AG04449 (cell line): ENCODE measurements at regions of chr2 and their contacts with region 1.

Region 1: DNA sequence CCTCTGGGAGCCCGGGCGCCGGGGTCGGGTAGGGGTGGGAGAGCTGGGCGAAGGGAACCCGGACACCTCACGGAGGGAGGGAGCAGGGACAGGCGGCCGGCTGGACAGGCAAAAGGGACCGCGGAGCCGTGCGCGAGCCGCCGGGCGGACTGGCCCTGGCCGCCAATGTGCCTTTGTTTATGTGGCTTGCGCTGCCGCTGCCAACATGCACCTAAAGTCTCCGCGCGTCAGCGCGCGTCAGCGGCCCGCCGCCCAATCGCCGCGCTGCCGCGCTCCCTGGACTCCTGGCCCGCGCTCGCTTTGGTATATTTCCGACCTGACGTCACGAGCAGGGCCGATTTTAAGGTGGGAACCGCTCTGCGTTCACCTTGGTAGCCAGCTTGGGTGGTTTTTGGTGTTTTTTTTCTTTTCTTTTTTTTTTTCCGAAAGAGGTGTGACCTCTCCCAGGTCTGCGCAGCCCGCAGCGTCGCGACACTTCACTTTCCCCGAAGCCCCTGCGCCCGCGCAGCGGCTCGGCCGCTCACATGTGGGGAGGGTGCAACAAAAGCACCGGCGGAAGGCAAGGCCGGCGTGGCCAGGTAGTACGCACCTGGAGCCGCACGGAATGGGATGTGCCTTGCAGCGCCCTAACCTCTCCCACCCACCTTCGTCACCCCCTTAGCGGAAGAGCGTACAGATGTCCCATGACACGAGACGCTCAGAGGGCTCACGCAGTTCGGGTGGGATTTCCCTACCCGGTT is at the start of gene NR4A2:
- DNase-seq: no peak
- H3K4me3 ChIP-seq: peak within 1 kb of the TSS; percentile 74
- CTCF ChIP-seq: no peak

Region 2: GRCh38 chr2:156346731-156347130 is 14.0 kb after region 1 on chr2:
- CTCF ChIA-PET with region 1: interaction called, 16 read pairs
- POLR2A ChIA-PET with region 1: interaction called, 10 read pairs
- DNase-seq: no peak
- H3K4me3 ChIP-seq: no peak overlapping the region
- CTCF ChIP-seq: no peak

Region 3: GRCh38 chr2:156505696-156506095 is 173.0 kb after region 1 on chr2:
- CTCF ChIA-PET with region 1: no interaction called
- POLR2A ChIA-PET with region 1: no interaction called
- DNase-seq: no peak
- H3K4me3 ChIP-seq: no peak overlapping the region
- CTCF ChIP-seq: no peak

Region 4: DNA sequence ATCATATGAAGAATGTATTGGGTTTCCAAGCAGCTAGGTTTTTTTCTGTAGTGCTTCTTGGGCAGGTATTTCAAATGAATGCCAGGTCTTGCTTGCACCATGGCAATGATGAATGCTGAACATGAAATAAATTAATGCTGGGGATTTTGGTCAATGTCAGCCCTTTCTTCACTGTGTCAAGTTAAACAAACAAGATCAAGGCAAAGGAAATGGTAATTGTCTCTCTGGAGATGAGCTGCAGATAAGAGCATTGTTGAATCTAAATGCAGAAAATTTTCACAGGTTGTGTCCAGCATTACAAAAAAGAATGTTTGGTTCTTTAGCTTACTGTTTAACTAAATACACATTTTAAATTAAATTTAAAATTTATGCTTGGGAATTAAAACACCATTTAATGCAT is 247.8 kb after region 1 on chr2:
- CTCF ChIA-PET with region 1: interaction called, 75 read pairs
- POLR2A ChIA-PET with region 1: no interaction called
- DNase-seq: no peak
- H3K4me3 ChIP-seq: no peak overlapping the region
- CTCF ChIP-seq: no peak